Activated naive CD4-positive, alpha-beta T cell treated with anti-CD3 and anti-CD28 coated beads, Interleukin-2, amount 10 ng/mL, durations not matched to agents 7 days and 5 days (primary cell): ENCODE measurements at regions of chr14 and their contacts with region 1.

Region 1: GRCh38 chr14:76386915-76387782 is 11.2 kb downstream of the ESRRB start:
- DNase-seq: peak; percentile 75
- H3K4me3 Mint-ChIP-seq: no peak overlapping the region
- H3K27ac Mint-ChIP-seq: no peak overlapping the region
- H3K4me1 Mint-ChIP-seq: no peaks in the 10 kb centered on the region
- H3K27me3 Mint-ChIP-seq: peaks cover 18% of the 10 kb centered on the region

Region 2: GRCh38 chr14:76045773-76046172 is 341.4 kb before region 1 on chr14:
- CTCF ChIA-PET with region 1: interaction called, 42 read pairs
- DNase-seq: no peak
- H3K4me3 Mint-ChIP-seq: no peak overlapping the region
- H3K27ac Mint-ChIP-seq: no peak overlapping the region
- H3K4me1 Mint-ChIP-seq: no peaks in the 10 kb centered on the region
- H3K27me3 Mint-ChIP-seq: no peaks in the 10 kb centered on the region

Region 3: DNA sequence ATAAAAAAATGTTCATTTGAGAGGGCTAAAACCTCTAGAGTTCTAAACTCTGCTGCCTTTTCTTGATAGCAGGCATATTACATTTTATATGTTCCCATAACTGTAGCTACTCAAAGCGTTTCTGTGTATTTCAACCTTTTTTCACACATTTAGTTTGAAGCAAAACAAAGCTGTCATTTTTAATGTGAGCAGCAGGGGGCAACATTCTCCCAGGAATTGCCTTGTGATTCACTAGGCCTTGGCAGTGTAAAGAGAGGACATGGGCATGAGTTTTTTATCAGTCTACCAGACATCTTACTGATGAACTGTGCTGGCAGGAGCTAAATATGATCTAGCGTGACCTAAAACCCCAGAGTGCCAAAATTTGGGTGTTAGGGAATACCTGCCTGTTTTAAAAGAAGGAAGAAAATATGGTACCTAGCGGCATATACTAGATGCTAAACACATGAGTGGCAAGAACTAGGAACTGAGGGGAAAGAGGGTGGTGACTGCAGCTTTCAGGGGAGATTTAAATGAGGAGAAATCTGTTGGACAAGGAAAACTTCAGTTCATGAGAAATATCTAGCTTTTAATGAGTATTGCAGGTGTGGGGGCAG is 336.3 kb before region 1 on chr14:
- CTCF ChIA-PET with region 1: interaction called, 42 read pairs
- DNase-seq: peak; percentile 71
- H3K4me3 Mint-ChIP-seq: no peak overlapping the region
- H3K27ac Mint-ChIP-seq: no peak overlapping the region
- H3K4me1 Mint-ChIP-seq: no peaks in the 10 kb centered on the region
- H3K27me3 Mint-ChIP-seq: no peaks in the 10 kb centered on the region

Region 4: GRCh38 chr14:76812211-76813044 is 425.3 kb after region 1 on chr14 and contains the start of gene ANGEL1:
- CTCF ChIA-PET with region 1: no interaction called
- DNase-seq: peak; percentile 98
- H3K4me3 Mint-ChIP-seq: peak within 1 kb of the TSS; percentile 90
- H3K27ac Mint-ChIP-seq: peak within 1 kb of the TSS; percentile 81
- H3K4me1 Mint-ChIP-seq: peaks cover 21% of the 10 kb centered on the region
- H3K27me3 Mint-ChIP-seq: no peaks in the 10 kb centered on the region